Activated T-helper 1 cell treated with anti-CD3 and anti-CD28 coated beads, Interleukin-12 subunit alpha, Interleukin-12 subunit beta, Interleukin-2, Interleukin-4 antibody, amounts not matched to agents 30 ng/mL and 10 ng/mL and 1 ng/mL, durations not matched to agents 14 hours and 24 hours and 36 hours (primary cell): ENCODE measurements at regions of chr10 and their contacts with region 1.

Region 1: GRCh38 chr10:24465891-24466818 is 257.2 kb downstream of the KIAA1217 start:
- DNase-seq: peak; percentile 61
- H3K4me3 Mint-ChIP-seq: peak overlapping the region; percentile 79
- H3K27ac Mint-ChIP-seq: peak overlapping the region; percentile 77
- H3K4me1 Mint-ChIP-seq: peaks cover 61% of the 10 kb centered on the region
- H3K27me3 Mint-ChIP-seq: peaks cover 6% of the 10 kb centered on the region

Region 2: DNA sequence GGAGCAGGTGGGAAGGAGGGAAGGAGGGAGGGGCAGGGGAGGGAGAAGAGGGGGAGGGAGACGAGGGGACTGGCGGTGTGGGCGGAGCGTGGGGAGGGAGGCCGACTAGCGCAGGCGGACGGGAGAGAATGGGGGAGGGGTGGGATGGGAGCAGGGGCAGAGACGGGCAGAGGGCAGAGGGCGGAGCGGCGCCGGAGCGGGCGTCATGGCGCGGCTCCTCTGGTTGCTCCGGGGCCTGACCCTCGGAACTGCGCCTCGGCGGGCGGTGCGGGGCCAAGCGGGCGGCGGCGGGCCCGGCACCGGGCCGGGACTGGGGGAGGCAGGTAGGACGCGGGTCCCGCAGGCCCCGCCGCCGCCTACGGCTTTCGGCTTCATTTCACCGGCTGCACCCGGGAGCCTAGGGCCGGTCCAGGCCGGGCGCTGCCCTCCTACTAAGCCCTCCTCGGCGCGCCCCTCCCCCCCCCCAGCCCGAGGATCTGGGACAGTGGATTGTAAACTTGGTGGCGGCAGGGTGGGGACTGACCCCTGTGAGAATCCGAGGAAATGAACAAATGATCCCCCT is 1370.7 kb before region 1 on chr10 and contains the start of gene MSRB2:
- intact Hi-C with region 1: loop called (anchors 5 kb)
- DNase-seq: peak; percentile 64
- H3K4me3 Mint-ChIP-seq: peak within 1 kb of the TSS; percentile 92
- H3K27ac Mint-ChIP-seq: peak within 1 kb of the TSS; percentile 91
- H3K4me1 Mint-ChIP-seq: peaks cover 36% of the 10 kb centered on the region
- H3K27me3 Mint-ChIP-seq: peaks cover 6% of the 10 kb centered on the region
- total RNA-seq, gene MSRB2: 3.0 and 4.0 TPM in 2 replicates

Region 3: GRCh38 chr10:23994479-23995046 is 471.6 kb before region 1 on chr10:
- intact Hi-C with region 1: no loop called
- DNase-seq: peak; percentile 5
- H3K4me3 Mint-ChIP-seq: no peak overlapping the region
- H3K27ac Mint-ChIP-seq: no peak overlapping the region
- H3K4me1 Mint-ChIP-seq: no peaks in the 10 kb centered on the region
- H3K27me3 Mint-ChIP-seq: no peaks in the 10 kb centered on the region

Region 4: GRCh38 chr10:24209946-24210491 is 256.1 kb before region 1 on chr10:
- intact Hi-C with region 1: loop called (anchors 1 kb)
- DNase-seq: peak; percentile 8
- H3K4me3 Mint-ChIP-seq: peak overlapping the region; percentile 83
- H3K27ac Mint-ChIP-seq: peak overlapping the region; percentile 90
- H3K4me1 Mint-ChIP-seq: peaks cover 39% of the 10 kb centered on the region
- H3K27me3 Mint-ChIP-seq: peaks cover 24% of the 10 kb centered on the region

Region 5: GRCh38 chr10:24415455-24416125 is 50.6 kb before region 1 on chr10:
- intact Hi-C with region 1: loop called (anchors 1 kb)
- DNase-seq: no peak
- H3K4me3 Mint-ChIP-seq: no peak overlapping the region
- H3K27ac Mint-ChIP-seq: no peak overlapping the region
- H3K4me1 Mint-ChIP-seq: no peaks in the 10 kb centered on the region
- H3K27me3 Mint-ChIP-seq: no peaks in the 10 kb centered on the region

Region 6: GRCh38 chr10:24603333-24603732 is 137.2 kb after region 1 on chr10:
- intact Hi-C with region 1: loop called (anchors 2 kb)
- DNase-seq: no peak
- H3K4me3 Mint-ChIP-seq: peak overlapping the region; percentile 45
- H3K27ac Mint-ChIP-seq: peak overlapping the region; percentile 95
- H3K4me1 Mint-ChIP-seq: peaks cover 38% of the 10 kb centered on the region
- H3K27me3 Mint-ChIP-seq: no peaks in the 10 kb centered on the region

Region 7: GRCh38 chr10:24901686-24902399 is 435.7 kb after region 1 on chr10:
- intact Hi-C with region 1: loop called (anchors 1 kb)
- DNase-seq: no peak
- H3K4me3 Mint-ChIP-seq: no peak overlapping the region
- H3K27ac Mint-ChIP-seq: peak overlapping the region; percentile 73
- H3K4me1 Mint-ChIP-seq: peaks cover 33% of the 10 kb centered on the region
- H3K27me3 Mint-ChIP-seq: no peaks in the 10 kb centered on the region